ENCODE measurements at regions of chr2 and their contacts with region 1.

Region 1: DNA sequence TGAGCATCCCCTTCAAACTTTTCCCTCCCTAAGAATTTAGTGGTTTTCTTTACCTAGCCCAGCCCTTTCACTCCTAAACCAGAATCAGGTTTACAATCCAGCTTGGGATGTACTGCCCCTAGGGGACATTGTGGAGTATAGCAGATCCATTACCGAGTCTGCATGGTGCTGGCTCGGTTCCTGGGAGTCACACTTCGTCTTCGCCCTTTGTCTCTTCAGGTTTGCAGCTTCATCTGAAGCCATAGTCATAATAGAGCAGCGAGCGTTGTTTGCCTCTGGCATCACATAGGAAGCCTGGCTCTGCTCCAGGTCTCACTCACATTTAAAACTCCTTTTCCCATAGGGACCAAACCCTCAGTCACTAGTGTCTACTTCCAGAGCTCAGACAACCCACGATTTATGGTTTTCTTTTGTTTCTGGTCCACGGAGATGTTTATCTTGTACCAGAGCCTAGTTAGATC is 16.8 kb upstream of the LYPD6 start:
- DNase-seq: peak; percentile 40
- ATAC-seq: peak; percentile 97
- H3K4me3 ChIP-seq: peak overlapping the region; percentile 4; a peak in 1 of 4 replicates
- H3K27ac ChIP-seq: no peak overlapping the region
- H3K4me1 ChIP-seq: peaks cover 0 to 3% of the 10 kb centered on the region in 2 experiments; a peak in 1 of 4 replicates
- H3K27me3 ChIP-seq: no peaks in the 10 kb centered on the region
- CTCF ChIP-seq: peak; percentile 58 to 93 (median 92); a peak in 5 of 6 replicates
- POLR2A ChIP-seq: no peak
- RAD21 ChIP-seq: peak; percentile 73

Region 2: DNA sequence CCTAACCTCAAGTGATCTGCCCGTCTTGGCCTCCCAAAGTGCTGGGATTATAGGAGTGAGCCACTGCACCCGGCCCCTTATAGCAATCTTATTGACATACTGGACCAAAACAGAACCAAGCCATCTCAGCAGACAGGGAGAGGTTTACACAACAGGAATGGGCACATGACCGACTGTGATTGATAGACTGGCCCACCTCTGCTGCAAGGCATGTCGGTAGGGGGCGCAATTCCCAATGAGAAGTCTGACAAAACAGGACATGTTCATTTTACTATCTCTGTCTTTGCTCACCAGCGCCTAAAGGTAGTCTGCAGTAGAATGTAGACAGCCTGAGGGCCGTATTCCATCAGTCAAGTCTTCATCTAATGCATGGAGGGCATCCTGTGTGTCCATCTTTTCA is 273.1 kb before region 1 on chr2:
- CTCF ChIA-PET with region 1: interaction called, 5 read pairs
- POLR2A ChIA-PET with region 1: no interaction called
- RAD21 ChIA-PET with region 1: no interaction called
- intact Hi-C with region 1: loop called (anchors 2 kb)
- DNase-seq: peak; percentile 42
- ATAC-seq: peak; percentile 20
- H3K4me3 ChIP-seq: no peak overlapping the region
- H3K27ac ChIP-seq: no peak overlapping the region
- H3K4me1 ChIP-seq: peaks cover 2 to 15% of the 10 kb centered on the region in 2 experiments; a peak in 2 of 4 replicates
- H3K27me3 ChIP-seq: no peaks in the 10 kb centered on the region
- CTCF ChIP-seq: peak; percentile 25 to 74 (median 64); a peak in 4 of 6 replicates
- POLR2A ChIP-seq: no peak
- RAD21 ChIP-seq: peak; percentile 48

Region 3: DNA sequence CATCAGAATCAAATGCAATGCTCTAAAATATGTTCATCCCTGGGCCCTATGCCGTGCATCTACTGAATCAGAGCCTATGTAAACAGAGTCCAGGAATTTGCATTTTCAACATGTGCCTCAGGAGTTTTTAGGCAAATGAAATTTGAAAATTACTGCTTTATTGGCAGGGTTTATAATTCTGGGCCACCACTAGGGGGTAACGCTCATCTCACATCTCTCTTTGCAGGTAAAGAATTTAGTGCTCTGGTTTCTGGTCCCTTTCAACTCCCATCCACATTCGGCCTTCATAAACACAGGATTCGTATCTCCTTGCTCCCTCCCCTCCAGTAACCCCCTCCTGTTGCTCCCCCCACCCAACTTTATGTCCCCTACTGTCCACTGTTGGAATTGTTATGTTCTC is 225.8 kb before region 1 on chr2:
- CTCF ChIA-PET with region 1: no interaction called
- POLR2A ChIA-PET with region 1: no interaction called
- RAD21 ChIA-PET with region 1: no interaction called
- intact Hi-C with region 1: loop called (anchors 5 kb)
- DNase-seq: no peak
- ATAC-seq: peak; percentile 70
- H3K4me3 ChIP-seq: no peak overlapping the region
- H3K27ac ChIP-seq: no peak overlapping the region
- H3K4me1 ChIP-seq: no peaks in the 10 kb centered on the region
- H3K27me3 ChIP-seq: no peaks in the 10 kb centered on the region
- CTCF ChIP-seq: peak; percentile 30 to 69 (median 48); a peak in 5 of 6 replicates
- POLR2A ChIP-seq: no peak
- RAD21 ChIP-seq: peak; percentile 44; the same call in 1 of the 2 replicates

Region 4: GRCh38 chr2:149561309-149561926 is 247.9 kb after region 1 on chr2:
- CTCF ChIA-PET with region 1: no interaction called
- POLR2A ChIA-PET with region 1: no interaction called
- RAD21 ChIA-PET with region 1: no interaction called
- intact Hi-C with region 1: loop called (anchors 2 kb)
- DNase-seq: no peak
- ATAC-seq: no peak
- H3K4me3 ChIP-seq: no peak overlapping the region
- H3K27ac ChIP-seq: no peak overlapping the region
- H3K4me1 ChIP-seq: no peaks in the 10 kb centered on the region
- H3K27me3 ChIP-seq: no peaks in the 10 kb centered on the region
- CTCF ChIP-seq: peak; percentile 66 to 94 (median 79)
- POLR2A ChIP-seq: no peak
- RAD21 ChIP-seq: peak; percentile 82

Region 5: DNA sequence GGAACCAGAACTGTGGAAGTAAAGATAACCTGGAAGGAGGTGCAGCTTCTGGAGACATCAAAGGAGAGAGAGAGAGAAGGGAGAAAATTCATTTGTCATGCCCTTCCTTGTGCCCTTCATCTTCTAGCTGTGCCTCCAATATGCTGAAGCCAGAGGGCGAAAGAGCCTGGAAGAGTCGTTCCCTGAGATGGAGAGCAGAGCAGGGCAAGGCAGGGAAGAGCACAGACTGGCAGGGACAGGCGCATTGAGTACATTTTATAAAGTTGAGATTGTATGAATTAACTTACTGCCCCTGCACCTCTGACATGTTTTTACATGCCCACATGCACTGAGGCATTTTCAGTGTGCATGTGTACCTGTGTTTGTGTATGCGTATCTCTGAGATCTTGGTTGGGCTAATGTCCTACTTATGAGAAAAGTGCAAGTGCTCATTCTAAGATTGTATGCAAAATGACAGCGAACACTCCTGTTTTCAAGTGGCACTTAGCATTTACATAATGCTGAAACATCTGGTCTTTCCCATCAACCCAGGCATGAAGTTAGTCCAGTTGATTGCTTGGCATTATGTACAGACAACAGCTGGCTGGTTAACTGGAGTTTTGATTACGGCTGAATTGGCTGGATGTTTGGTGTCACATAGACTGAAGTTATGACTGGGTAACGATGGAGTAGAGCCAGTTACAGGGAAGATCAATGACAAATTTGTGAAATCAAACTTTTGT is 297.7 kb after region 1 on chr2:
- CTCF ChIA-PET with region 1: no interaction called
- POLR2A ChIA-PET with region 1: no interaction called
- RAD21 ChIA-PET with region 1: no interaction called
- intact Hi-C with region 1: no loop called
- DNase-seq: no peak
- ATAC-seq: no peak
- H3K4me3 ChIP-seq: no peak overlapping the region
- H3K27ac ChIP-seq: no peak overlapping the region
- H3K4me1 ChIP-seq: no peaks in the 10 kb centered on the region
- H3K27me3 ChIP-seq: no peaks in the 10 kb centered on the region
- CTCF ChIP-seq: peak in 2 of 3 experiments; percentile 20 to 30; a peak in 2 of 6 replicates
- POLR2A ChIP-seq: no peak
- RAD21 ChIP-seq: peak; percentile 48

Region 6: GRCh38 chr2:149650006-149650405 is 336.5 kb after region 1 on chr2:
- CTCF ChIA-PET with region 1: no interaction called
- POLR2A ChIA-PET with region 1: no interaction called
- RAD21 ChIA-PET with region 1: no interaction called
- intact Hi-C with region 1: no loop called
- DNase-seq: no peak
- ATAC-seq: no peak
- H3K4me3 ChIP-seq: no peak overlapping the region
- H3K27ac ChIP-seq: no peak overlapping the region
- H3K4me1 ChIP-seq: peaks cover 0 to 8% of the 10 kb centered on the region in 2 experiments; a peak in 2 of 4 replicates
- H3K27me3 ChIP-seq: no peaks in the 10 kb centered on the region
- CTCF ChIP-seq: no peak
- POLR2A ChIP-seq: no peak
- RAD21 ChIP-seq: no peak